ENCODE measurements at regions of chr6 and their contacts with region 1.

Region 1: GRCh38 chr6:3977875-3978711 is 100.8 kb downstream of the FAM217A start:
- DNase-seq: peak; percentile 75
- ATAC-seq: peak; percentile 100
- H3K4me3 Mint-ChIP-seq: peak overlapping the region; percentile 53
- H3K27ac Mint-ChIP-seq: peak overlapping the region; percentile 67
- H3K4me1 Mint-ChIP-seq: peaks cover 18% of the 10 kb centered on the region
- H3K27me3 Mint-ChIP-seq: peaks cover 17% of the 10 kb centered on the region

Region 2: GRCh38 chr6:3732345-3733141 is 245.6 kb before region 1 on chr6:
- CTCF ChIA-PET with region 1: interaction called, 16 read pairs
- DNase-seq: peak; percentile 67
- ATAC-seq: peak; percentile 70
- H3K4me3 Mint-ChIP-seq: no peak overlapping the region
- H3K27ac Mint-ChIP-seq: no peak overlapping the region
- H3K4me1 Mint-ChIP-seq: peaks cover 3% of the 10 kb centered on the region
- H3K27me3 Mint-ChIP-seq: peaks cover 12% of the 10 kb centered on the region

Region 3: GRCh38 chr6:3742426-3743344 is 235.4 kb before region 1 on chr6:
- CTCF ChIA-PET with region 1: interaction called, 32 read pairs
- DNase-seq: peak; percentile 88
- ATAC-seq: peak; percentile 87
- H3K4me3 Mint-ChIP-seq: no peak overlapping the region
- H3K27ac Mint-ChIP-seq: no peak overlapping the region
- H3K4me1 Mint-ChIP-seq: peaks cover 14% of the 10 kb centered on the region
- H3K27me3 Mint-ChIP-seq: peaks cover 25% of the 10 kb centered on the region

Region 4: GRCh38 chr6:3748208-3749066 is 229.7 kb before region 1 on chr6:
- CTCF ChIA-PET with region 1: interaction called, 32 read pairs
- DNase-seq: peak; percentile 50
- ATAC-seq: peak; percentile 17
- H3K4me3 Mint-ChIP-seq: no peak overlapping the region
- H3K27ac Mint-ChIP-seq: no peak overlapping the region
- H3K4me1 Mint-ChIP-seq: peaks cover 6% of the 10 kb centered on the region
- H3K27me3 Mint-ChIP-seq: peaks cover 48% of the 10 kb centered on the region

Region 5: DNA sequence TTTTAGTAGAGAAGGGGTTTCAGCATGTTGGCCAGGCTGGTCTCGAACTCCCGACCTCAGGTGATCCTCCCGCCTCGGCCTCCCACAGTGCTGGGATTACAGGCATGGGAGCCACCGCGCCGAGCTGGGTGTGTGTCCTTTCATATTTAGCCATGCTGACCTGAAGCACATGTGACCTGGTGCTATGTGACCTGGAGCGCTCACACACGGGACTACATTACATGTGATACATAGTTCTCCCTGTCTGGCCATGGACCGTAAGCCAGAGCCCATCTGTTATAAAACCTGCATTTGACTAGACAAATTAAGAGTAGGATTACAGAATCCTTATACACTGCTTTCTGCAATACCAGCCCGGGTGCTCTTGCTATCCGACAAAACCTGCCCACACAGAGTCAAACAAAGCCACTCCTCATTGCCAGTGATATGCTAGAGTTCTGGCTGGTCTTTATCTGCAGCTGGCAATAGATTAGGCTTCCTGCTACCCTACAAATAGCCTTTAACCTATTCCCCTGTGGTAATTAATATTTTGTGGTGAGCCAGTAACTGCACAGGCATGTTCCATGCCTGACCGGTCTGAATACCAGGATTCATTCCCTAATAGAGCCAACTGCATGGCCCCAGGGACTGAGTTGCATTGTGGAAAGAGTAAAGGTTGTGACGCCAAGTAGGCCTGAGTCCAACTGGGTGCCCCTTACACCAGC is 155.2 kb before region 1 on chr6:
- CTCF ChIA-PET with region 1: no interaction called
- DNase-seq: no peak
- ATAC-seq: no peak
- H3K4me3 Mint-ChIP-seq: no peak overlapping the region
- H3K27ac Mint-ChIP-seq: no peak overlapping the region
- H3K4me1 Mint-ChIP-seq: no peaks in the 10 kb centered on the region
- H3K27me3 Mint-ChIP-seq: no peaks in the 10 kb centered on the region

Region 6: DNA sequence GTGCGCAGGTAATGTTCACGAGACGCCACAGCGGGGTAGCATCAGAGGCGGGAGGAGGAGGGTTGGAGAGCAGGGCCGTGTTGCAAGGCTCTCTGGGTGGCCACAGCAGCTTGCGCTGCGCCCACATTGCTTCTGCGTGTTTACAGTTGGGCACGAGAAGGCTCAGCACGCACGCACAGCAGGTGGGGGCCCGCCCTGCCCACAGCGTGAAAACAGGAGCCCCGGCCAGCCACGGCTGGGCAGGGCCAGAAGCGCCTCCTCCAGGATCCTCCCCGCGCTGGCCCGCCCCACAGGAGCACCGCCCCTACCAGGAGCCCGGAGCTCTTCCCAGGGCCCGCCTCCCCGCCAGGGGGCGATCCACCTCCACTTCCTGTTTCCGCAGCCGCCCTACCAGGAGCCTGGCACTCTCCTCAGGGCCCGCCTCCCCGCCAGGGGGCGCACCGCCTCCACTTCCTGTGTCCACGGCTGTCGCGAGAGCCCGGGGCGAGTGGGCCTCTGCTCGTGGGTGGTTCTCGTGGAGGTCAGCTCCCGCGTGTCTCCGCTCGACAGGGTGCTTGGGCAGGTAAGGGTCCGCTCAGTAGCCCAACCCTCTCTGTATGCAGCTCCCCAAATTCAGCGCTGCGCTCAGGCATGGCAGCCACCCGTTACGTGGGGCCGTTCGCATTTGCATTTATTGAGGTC is 129.0 kb before region 1 on chr6 and contains the start of gene FAM50B:
- CTCF ChIA-PET with region 1: interaction called, 31 read pairs
- DNase-seq: peak; percentile 94
- ATAC-seq: peak; percentile 96
- H3K4me3 Mint-ChIP-seq: peak within 1 kb of the TSS; percentile 74
- H3K27ac Mint-ChIP-seq: peak within 1 kb of the TSS; percentile 74
- H3K4me1 Mint-ChIP-seq: peaks cover 32% of the 10 kb centered on the region
- H3K27me3 Mint-ChIP-seq: no peaks in the 10 kb centered on the region
- total RNA-seq, gene FAM50B: 8.8 to 10.6 TPM

Region 7: DNA sequence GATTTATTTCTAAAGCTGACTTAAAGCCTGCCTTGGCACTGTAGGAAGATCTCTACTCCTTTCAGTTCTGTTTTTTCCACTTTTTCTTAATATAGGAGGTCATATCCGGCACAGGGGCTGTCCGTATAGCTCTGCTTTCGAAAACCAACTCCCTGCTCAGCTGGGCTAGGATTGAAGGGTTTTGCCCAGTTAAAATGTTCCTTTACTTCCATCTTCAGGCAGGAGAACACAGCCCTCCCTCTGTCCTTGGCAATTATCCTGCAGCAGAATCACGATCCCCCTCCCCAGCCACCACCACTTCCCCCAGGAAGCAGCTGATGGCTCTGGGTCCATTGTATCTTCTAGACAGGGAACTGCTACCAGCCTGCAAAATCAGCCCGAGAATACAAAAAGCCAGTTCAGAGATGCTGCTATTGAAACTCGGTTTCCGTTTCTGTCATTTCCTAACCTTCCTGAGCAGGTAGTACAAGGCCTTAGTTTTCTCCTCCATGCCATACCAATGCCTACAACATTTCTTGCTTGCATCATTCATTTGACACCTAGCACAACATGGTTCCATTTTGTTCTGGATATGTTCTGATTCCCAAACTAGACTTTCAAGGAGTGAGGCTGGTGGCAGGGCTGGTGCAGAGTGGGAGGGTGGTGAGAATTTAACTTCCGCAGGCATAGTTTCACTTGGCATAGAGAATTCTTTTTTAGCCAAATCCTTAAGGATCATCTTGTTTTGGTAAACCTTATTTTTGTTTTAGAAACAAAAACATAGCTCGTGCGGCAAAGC is 75.0 kb before region 1 on chr6:
- CTCF ChIA-PET with region 1: no interaction called
- DNase-seq: no peak
- ATAC-seq: no peak
- H3K4me3 Mint-ChIP-seq: no peak overlapping the region
- H3K27ac Mint-ChIP-seq: no peak overlapping the region
- H3K4me1 Mint-ChIP-seq: no peaks in the 10 kb centered on the region
- H3K27me3 Mint-ChIP-seq: peaks cover 35% of the 10 kb centered on the region

Region 8: GRCh38 chr6:3990692-3991501 is 12.8 kb after region 1 on chr6:
- CTCF ChIA-PET with region 1: interaction called, 22 read pairs
- DNase-seq: peak; percentile 74
- ATAC-seq: peak; percentile 83
- H3K4me3 Mint-ChIP-seq: no peak overlapping the region
- H3K27ac Mint-ChIP-seq: no peak overlapping the region
- H3K4me1 Mint-ChIP-seq: peaks cover 3% of the 10 kb centered on the region
- H3K27me3 Mint-ChIP-seq: no peaks in the 10 kb centered on the region

Region 9: DNA sequence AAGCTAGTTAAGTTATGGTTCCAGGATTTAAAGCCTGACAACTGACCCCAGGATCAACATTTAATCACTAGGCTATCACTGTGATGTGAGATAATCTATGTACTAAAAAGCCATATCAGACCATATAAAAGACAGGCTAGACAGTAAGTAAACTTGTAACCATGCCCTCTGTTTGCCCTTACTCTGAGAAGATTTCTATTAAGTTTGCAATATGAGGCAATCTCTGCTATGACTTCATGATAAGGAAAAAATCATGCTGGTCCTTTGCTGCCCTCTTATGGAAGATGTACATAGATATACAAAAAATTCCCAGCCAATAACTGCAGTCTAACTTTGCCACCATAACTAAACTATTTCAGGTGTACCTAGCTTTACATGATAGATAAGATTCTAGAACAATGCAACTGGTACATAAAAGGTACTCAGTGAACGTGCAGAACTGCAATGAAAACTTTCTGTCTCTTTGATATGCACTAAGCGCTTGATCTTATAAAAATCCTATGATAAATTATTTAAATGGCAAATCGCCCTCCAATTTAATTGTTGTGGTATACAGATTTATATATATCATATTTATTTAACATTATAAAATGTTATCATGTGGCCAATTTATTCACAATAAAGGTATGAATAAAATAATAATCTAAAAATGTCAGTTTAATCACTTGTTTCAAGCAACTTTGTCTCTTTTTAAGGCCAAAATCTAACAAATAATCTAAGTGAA is 30.4 kb after region 1 on chr6:
- CTCF ChIA-PET with region 1: interaction called, 17 read pairs
- DNase-seq: no peak
- ATAC-seq: peak; percentile 43
- H3K4me3 Mint-ChIP-seq: no peak overlapping the region
- H3K27ac Mint-ChIP-seq: no peak overlapping the region
- H3K4me1 Mint-ChIP-seq: peaks cover 43% of the 10 kb centered on the region
- H3K27me3 Mint-ChIP-seq: no peaks in the 10 kb centered on the region

Region 10: DNA sequence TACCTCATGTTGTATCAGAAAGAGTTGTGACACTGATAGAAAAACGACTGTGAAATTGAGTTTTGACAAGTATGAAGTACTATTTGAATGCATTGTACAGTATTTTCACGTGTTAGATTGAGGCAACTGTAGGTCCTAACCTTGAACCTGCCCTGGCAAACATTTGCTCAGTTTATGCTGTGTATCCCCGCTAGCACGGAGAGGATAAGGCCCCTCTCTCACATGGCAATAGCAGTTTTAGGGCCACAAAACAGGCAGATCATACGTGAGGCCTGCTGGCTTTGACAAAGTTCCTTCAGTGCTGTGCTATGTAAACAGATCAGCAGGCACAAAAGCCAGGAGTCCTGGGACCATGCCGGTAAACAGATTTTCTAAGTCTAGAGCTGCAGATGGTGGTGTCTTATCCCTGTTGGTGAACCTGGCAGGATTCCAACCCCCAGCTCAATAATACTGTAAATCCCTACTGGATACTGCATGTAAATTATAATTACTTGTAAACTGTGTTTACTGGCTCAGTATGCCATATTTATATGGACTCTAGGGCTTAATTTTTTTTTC is 124.7 kb after region 1 on chr6:
- CTCF ChIA-PET with region 1: no interaction called
- DNase-seq: no peak
- ATAC-seq: no peak
- H3K4me3 Mint-ChIP-seq: no peak overlapping the region
- H3K27ac Mint-ChIP-seq: no peak overlapping the region
- H3K4me1 Mint-ChIP-seq: no peaks in the 10 kb centered on the region
- H3K27me3 Mint-ChIP-seq: peaks cover 7% of the 10 kb centered on the region

Measured in activated CD8-positive, alpha-beta memory T cell treated with anti-CD3 and anti-CD28 coated beads, Interleukin-2, amount 10 ng/mL, durations not matched to agents 7 days and 5 days (primary cell).